ENCODE measurements at regions of chr4 and their contacts with region 1.

Region 1: GRCh38 chr4:142405021-142405694 is 440.9 kb downstream of the INPP4B start:
- DNase-seq: peak; percentile 75
- H3K4me3 Mint-ChIP-seq: peak overlapping the region; percentile 99
- H3K27ac Mint-ChIP-seq: peak overlapping the region; percentile 100
- H3K4me1 Mint-ChIP-seq: peaks cover 53% of the 10 kb centered on the region
- H3K27me3 Mint-ChIP-seq: no peaks in the 10 kb centered on the region

Region 2: GRCh38 chr4:142274137-142274536 is 131.0 kb before region 1 on chr4:
- CTCF ChIA-PET with region 1: interaction called, 3 read pairs
- intact Hi-C with region 1: loop called (anchors 2 kb)
- DNase-seq: no peak
- H3K4me3 Mint-ChIP-seq: no peak overlapping the region
- H3K27ac Mint-ChIP-seq: peak overlapping the region; percentile 79
- H3K4me1 Mint-ChIP-seq: peaks cover 85% of the 10 kb centered on the region
- H3K27me3 Mint-ChIP-seq: no peaks in the 10 kb centered on the region

Region 3: GRCh38 chr4:142379277-142380057 is 25.7 kb before region 1 on chr4:
- CTCF ChIA-PET with region 1: interaction called, 10 read pairs
- intact Hi-C with region 1: loop called (anchors 1 kb)
- DNase-seq: no peak
- H3K4me3 Mint-ChIP-seq: no peak overlapping the region
- H3K27ac Mint-ChIP-seq: peak overlapping the region; percentile 75
- H3K4me1 Mint-ChIP-seq: peaks cover 72% of the 10 kb centered on the region
- H3K27me3 Mint-ChIP-seq: no peaks in the 10 kb centered on the region

Region 4: DNA sequence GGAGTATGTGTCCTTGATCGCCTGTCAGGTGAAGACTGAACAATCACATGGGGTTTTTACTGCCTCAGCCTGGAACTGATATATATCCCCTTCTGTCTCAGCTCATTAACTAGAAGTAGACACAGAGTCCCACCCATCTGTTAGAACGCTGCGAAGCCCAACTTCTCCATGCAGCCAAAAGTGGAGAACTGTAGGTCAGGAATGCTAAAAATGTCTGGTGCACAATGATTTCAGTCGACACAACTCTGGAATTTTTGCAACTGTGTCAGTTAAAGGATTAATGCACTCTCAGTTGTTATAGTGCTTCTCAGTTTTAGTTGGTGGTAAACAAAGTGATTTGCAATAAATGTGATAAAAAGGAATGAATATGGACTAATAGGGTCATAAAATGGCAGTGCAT is 153.7 kb after region 1 on chr4:
- CTCF ChIA-PET with region 1: interaction called, 13 read pairs
- intact Hi-C with region 1: loop called (anchors 2 kb)
- DNase-seq: no peak
- H3K4me3 Mint-ChIP-seq: peak overlapping the region; percentile 49
- H3K27ac Mint-ChIP-seq: peak overlapping the region; percentile 84
- H3K4me1 Mint-ChIP-seq: peaks cover 77% of the 10 kb centered on the region
- H3K27me3 Mint-ChIP-seq: no peaks in the 10 kb centered on the region

Region 5: GRCh38 chr4:142713282-142714030 is 308.3 kb after region 1 on chr4:
- CTCF ChIA-PET with region 1: no interaction called
- intact Hi-C with region 1: loop called (anchors 1 kb)
- DNase-seq: no peak
- H3K4me3 Mint-ChIP-seq: peak overlapping the region; percentile 9
- H3K27ac Mint-ChIP-seq: peak overlapping the region; percentile 92
- H3K4me1 Mint-ChIP-seq: peaks cover 76% of the 10 kb centered on the region
- H3K27me3 Mint-ChIP-seq: no peaks in the 10 kb centered on the region

Region 6: DNA sequence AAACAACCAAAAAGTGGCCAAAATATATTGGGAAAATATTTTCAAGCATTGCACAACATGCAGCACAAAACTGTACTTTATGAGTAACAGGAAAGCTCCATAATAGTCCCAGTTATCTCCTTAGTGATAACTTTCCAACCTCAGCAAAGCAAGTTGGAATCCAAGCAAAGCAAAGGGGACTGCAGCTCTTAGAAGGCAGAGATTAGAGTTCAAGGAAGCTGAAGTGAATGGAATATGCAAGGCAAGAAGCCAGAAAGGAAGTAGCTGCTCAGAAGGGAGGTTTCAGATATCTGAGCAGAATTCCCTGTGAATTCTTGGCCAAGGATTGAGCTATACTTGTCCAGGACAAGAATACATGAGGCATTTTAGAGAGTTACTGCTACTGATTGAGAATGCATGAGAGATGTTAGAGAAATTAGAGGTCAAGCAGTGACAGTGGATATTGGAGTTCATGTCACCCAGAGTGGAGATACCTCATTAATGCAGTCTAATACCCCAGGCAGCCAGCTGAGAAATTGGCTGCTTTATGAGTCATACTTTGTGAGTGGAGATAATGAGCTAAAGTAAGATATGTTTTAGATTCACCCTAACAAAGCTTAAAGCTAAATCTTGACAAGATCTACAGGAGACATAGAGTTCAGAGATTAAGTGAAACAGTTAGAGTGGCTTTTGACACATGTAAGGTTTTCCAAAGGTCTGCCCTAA is 338.1 kb after region 1 on chr4:
- CTCF ChIA-PET with region 1: no interaction called
- intact Hi-C with region 1: no loop called
- DNase-seq: no peak
- H3K4me3 Mint-ChIP-seq: no peak overlapping the region
- H3K27ac Mint-ChIP-seq: no peak overlapping the region
- H3K4me1 Mint-ChIP-seq: no peaks in the 10 kb centered on the region
- H3K27me3 Mint-ChIP-seq: no peaks in the 10 kb centered on the region

Region 7: DNA sequence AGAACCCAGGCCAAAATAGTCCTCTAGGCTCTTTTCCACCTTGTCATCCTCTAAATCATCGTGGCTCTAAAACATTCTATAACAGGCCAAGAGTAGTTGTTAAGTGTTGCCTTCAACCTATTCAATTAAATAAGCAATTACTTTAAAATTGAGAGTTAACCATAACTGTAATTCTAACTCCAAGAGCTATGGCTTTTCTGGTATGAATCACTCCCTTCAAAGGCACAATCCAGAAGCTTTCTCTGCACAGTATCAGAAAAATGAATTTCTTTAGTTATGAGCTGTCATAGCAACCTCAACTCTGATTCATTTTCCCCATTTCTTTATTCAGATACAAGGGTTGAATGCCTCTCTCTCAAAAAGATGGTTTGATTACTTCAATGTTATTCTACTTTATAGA is 419.2 kb after region 1 on chr4:
- CTCF ChIA-PET with region 1: no interaction called
- intact Hi-C with region 1: loop called (anchors 1 kb)
- DNase-seq: no peak
- H3K4me3 Mint-ChIP-seq: peak overlapping the region; percentile 5
- H3K27ac Mint-ChIP-seq: peak overlapping the region; percentile 86
- H3K4me1 Mint-ChIP-seq: peaks cover 18% of the 10 kb centered on the region
- H3K27me3 Mint-ChIP-seq: no peaks in the 10 kb centered on the region

Region 8: DNA sequence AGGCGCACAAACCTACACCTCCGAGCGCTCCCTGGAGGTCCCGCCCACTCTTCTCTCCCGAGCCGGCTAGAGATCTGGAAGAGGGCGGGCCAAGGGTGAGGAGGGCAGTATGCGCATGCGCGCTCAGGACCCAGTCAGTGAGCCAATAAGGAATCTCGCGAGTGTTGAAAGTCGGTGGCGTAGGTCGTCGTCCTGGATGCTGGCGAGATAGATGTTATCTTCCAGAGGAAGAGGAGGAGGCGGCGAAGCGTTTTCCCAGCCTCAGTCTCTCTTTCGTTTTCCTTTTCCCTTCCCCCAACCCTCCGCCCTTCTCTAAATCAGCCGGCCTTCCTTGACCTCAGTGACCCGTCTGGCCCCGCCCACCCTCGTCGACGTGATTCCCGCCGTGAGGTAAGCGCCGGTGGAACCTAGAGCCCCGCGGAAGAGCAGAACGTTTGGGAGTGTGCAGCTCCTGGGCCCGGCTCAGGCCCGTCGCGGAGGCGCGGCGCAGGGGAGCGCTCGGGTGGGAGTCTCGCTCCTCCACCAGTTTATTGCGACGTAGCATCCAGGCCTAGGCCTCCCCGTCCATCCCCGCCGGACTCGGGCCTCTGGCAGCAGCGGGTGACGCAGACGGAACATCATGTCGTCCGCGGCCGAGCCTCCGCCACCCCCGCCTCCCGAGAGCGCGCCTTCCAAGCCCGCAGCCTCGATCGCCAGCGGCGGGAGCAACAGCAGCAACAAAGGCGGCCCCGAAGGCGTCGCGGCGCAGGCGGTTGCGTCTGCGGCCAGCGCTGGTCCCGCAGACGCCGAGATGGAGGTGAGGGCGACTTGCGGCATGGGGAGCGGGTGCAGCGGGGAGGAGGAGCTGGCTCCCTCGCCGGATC is 1108.4 kb after region 1 on chr4 and contains the start of gene SMARCA5:
- CTCF ChIA-PET with region 1: no interaction called
- intact Hi-C with region 1: loop called (anchors 10 kb)
- DNase-seq: peak; percentile 96
- H3K4me3 Mint-ChIP-seq: peak within 1 kb of the TSS; percentile 96
- H3K27ac Mint-ChIP-seq: peak within 1 kb of the TSS; percentile 97
- H3K4me1 Mint-ChIP-seq: peaks cover 30% of the 10 kb centered on the region
- H3K27me3 Mint-ChIP-seq: no peaks in the 10 kb centered on the region
- total RNA-seq, gene SMARCA5: 62.4 to 63.5 TPM

Measured in activated naive CD4-positive, alpha-beta T cell treated with anti-CD3 and anti-CD28 coated beads for 36 hours (primary cell).